ENCODE measurements at regions of chr6 and their contacts with region 1.

Region 1: DNA sequence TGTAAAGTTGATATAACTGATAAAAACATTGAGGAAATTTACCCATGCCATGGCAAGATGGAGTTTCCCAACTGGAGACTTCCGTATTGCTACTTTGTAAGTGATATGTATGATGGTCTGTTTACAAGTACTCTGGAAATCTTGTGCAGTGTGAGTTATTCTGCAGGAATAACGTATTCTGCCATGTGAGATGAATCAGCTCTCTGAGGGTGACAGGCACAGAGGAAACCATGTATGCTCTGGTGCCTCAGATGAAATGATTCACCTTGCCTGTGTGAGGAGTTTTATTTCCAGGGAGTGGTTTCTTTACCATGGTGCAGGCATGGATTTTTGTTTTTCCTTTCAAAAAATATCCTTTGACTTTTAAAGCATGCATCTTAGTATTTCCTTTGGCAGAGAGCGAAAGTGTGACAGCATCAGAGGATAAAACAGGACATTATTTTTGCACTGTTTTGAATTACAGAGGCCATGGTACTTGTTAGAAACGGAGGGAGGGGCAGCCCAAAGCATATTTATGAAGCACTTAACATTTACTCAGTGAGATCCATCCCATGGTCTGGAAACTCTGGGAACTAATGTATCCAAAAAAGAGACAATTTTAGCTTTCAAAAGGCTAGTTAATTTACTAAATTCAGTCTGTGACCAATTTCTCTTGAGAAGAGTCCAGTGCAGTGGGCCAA is 36.0 kb upstream of the MTRF1L start:
- DNase-seq: no peak
- H3K4me3 ChIP-seq: no peak overlapping the region
- H3K4me3 Mint-ChIP-seq: no peak overlapping the region
- H3K27ac ChIP-seq: no peak overlapping the region
- H3K27ac Mint-ChIP-seq: no peak overlapping the region
- H3K4me1 ChIP-seq: no peaks in the 10 kb centered on the region
- H3K4me1 Mint-ChIP-seq: no peaks in the 10 kb centered on the region
- H3K27me3 ChIP-seq: no peaks in the 10 kb centered on the region
- H3K27me3 Mint-ChIP-seq: peaks cover 0 to 4% (median 2%) of the 10 kb centered on the region in 3 donors
- CTCF ChIP-seq: no peak

Region 2: GRCh38 chr6:153231048-153231646 is 192.6 kb after region 1 on chr6:
- intact Hi-C with region 1: loop called in 1 of 2 experiments (anchors 5 kb)
- DNase-seq: no peak
- H3K4me3 ChIP-seq: no peak overlapping the region
- H3K4me3 Mint-ChIP-seq: no peak overlapping the region
- H3K27ac ChIP-seq: no peak overlapping the region
- H3K27ac Mint-ChIP-seq: no peak overlapping the region
- H3K4me1 ChIP-seq: no peaks in the 10 kb centered on the region
- H3K4me1 Mint-ChIP-seq: no peaks in the 10 kb centered on the region
- H3K27me3 ChIP-seq: no peaks in the 10 kb centered on the region
- H3K27me3 Mint-ChIP-seq: peaks cover 0 to 5% (median 4%) of the 10 kb centered on the region in 3 donors
- CTCF ChIP-seq: peak; percentile 75

Measured in CD14-positive monocyte (primary cell).